Posterior vena cava (tissue), 2 donors: ENCODE measurements at regions of chr18 and their contacts with region 1.

Region 1: DNA sequence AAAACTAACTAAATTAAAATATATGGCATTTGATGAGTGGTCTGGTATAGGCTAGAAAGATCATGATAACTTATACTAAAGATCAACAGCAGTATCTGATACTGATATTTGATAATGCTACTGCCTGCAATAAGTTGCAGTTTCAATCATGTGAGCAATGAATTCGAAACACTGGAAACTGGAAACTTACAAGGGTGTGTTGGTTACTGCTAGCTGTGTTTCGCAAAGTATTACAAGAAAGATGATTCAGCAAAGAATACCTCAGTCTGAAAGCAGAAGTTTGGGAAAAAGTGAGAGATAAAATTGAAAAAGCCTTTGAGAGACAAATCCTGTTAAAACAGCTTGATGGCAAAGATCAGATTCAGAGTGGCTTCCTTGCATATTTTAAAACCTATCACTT is 294.5 kb downstream of the CCDC178 start:
- DNase-seq: no peak

Region 2: DNA sequence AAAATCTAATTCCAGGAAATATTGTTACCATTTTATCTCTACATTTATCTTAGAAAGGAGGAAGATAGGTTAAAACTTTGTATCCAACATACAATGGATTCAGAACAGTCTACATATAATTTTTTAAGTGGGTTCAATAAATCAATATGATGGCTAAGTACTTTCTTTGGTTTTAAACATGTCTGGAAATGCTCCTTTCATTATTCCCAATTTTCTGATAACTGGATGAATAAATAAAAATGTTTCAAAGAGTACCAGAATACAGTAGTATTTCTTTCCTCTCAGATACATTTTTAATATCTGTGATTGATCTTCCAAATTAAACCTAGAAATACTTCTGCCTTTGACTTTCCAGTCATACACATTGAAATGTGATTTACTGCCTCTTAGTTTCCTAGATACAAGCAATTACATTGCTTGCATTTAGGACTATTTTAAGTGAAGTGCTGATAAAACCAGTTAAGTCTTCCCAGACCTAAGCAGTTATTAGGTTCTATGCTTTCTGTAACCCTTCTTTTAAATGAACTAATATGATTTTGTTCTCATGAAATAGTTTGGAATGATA is 11.0 kb after region 1 on chr18:
- intact Hi-C with region 1: loop called in 1 of 2 experiments (anchors 1 kb)
- DNase-seq: no peak